ENCODE measurements at regions of chr14 and their contacts with region 1.

Region 1: GRCh38 chr14:53341324-53341723 is 188.2 kb upstream of the DDHD1 start:
- DNase-seq: no peak
- H3K4me3 ChIP-seq: no peak overlapping the region
- H3K27ac ChIP-seq: no peak overlapping the region
- H3K4me1 ChIP-seq: peaks cover 0 to 6% (median 2%) of the 10 kb centered on the region in 4 experiments; a peak in 2 of 7 replicates
- H3K27me3 ChIP-seq: no peaks in the 10 kb centered on the region
- CTCF ChIP-seq: no peak
- EP300 ChIP-seq: no peak
- POLR2A ChIP-seq: no peak
- RAD21 ChIP-seq: no peak

Region 2: GRCh38 chr14:53331247-53331646 is 10.1 kb before region 1 on chr14:
- CTCF ChIA-PET with region 1: interaction called, 11 read pairs
- POLR2A ChIA-PET with region 1: no interaction called
- DNase-seq: no peak
- H3K4me3 ChIP-seq: no peak overlapping the region
- H3K27ac ChIP-seq: no peak overlapping the region
- H3K4me1 ChIP-seq: peaks cover 0 to 4% (median 1%) of the 10 kb centered on the region in 4 experiments; a peak in 3 of 7 replicates
- H3K27me3 ChIP-seq: no peaks in the 10 kb centered on the region
- CTCF ChIP-seq: no peak
- EP300 ChIP-seq: no peak
- POLR2A ChIP-seq: no peak
- RAD21 ChIP-seq: no peak

Measured in H1 (cell line).